Heart right ventricle (tissue), 16 donors: ENCODE measurements at regions of chr4 and their contacts with region 1.

Region 1: DNA sequence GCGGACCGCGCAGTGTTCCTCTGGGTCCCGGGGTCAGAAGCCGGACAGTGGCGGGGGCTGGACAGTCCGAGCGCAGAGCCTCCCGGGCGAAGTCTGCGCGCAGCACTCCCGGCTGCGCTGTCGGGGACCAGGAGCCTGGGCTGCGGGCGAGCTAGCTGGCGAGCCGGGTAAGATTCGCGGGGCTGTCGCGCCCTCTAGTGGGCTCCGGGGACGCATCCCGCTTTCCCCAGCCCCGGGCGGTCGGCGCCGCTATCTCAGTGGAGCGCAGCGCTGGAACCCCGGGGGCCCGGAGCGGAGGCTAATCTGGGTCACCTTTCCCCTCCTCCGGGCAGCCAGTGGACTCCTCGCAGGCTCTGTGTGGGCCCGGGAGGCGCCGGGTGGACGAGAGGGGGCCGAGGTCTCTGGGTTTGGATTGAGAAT is 4.2 kb downstream of the PDGFRA start:
- DNase-seq: peak; percentile 81 to 88
- ATAC-seq: peak; percentile 82 to 95 (median 88)
- H3K4me3 ChIP-seq: peak overlapping the region; percentile 26 to 65 (median 61)
- H3K27ac ChIP-seq: peak overlapping the region; percentile 19 to 85 (median 70)
- H3K4me1 ChIP-seq: peaks cover 4 to 67% (median 49%) of the 10 kb centered on the region in 9 donors
- H3K27me3 ChIP-seq: peaks cover 20 to 55% (median 46%) of the 10 kb centered on the region in 7 donors
- CTCF ChIP-seq: peak; percentile 73 to 90 (median 81)

Region 2: GRCh38 chr4:52376132-52376704 is 1857.1 kb before region 1 on chr4:
- intact Hi-C with region 1: loop called in 1 of 10 experiments (anchors 10 kb)
- DNase-seq: peak in 1 of 2 donors; percentile 38
- ATAC-seq: peak in 1 of 8 donors; percentile 21
- H3K4me3 ChIP-seq: no peak overlapping the region
- H3K27ac ChIP-seq: no peak overlapping the region
- H3K4me1 ChIP-seq: peaks cover 0 to 9% (median 0%) of the 10 kb centered on the region in 9 donors
- H3K27me3 ChIP-seq: peaks cover 0 to 6% (median 0%) of the 10 kb centered on the region in 7 donors
- CTCF ChIP-seq: peak; percentile 51 to 71 (median 62)

Region 3: GRCh38 chr4:53015681-53016080 is 1217.6 kb before region 1 on chr4:
- intact Hi-C with region 1: loop called (anchors 5 to 10 kb)
- DNase-seq: peak in 1 of 2 donors; percentile 38
- ATAC-seq: peak in 1 of 8 donors; percentile 29
- H3K4me3 ChIP-seq: no peak overlapping the region
- H3K27ac ChIP-seq: no peak overlapping the region
- H3K4me1 ChIP-seq: peaks cover 6 to 70% (median 55%) of the 10 kb centered on the region in 9 donors
- H3K27me3 ChIP-seq: no peaks in the 10 kb centered on the region
- CTCF ChIP-seq: peak; percentile 35 to 80 (median 66)

Region 4: DNA sequence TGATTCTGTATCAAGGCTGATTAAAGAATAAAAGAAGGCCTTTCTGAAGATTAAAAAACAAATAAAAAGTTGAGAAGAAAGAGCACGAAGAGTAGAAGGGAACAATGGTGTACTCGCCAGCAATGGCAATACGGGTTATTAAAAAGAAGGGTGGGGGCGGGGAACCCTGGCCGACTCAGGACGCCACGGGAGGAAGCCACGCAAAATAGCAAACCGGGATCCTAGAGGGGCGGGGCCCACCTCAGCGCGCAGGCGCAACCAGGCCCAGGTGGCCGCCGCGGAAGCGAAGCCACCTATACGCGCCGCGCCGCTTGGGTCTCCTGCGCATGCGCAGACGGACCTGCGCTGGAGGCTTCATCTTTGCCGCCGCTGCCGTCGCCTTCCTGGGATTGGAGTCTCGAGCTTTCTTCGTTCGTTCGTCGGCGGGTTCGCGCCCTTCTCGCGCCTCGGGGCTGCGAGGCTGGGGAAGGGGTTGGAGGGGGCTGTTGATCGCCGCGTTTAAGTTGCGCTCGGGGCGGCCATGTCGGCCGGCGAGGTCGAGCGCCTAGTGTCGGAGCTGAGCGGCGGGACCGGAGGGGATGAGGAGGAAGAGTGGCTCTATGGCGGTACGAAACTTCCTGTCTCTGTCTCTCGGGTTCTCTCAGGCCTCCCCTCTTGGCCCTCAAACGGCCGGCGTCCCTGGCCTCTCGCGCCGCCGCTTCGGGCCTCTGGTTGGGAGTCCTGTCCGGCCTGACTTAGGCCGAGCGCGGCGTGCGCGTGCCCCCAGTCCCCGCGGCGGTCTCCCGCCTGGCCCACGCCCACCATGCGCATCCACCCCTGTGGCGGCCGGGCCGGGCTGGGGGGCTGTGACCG is 855.7 kb before region 1 on chr4 and contains the start of gene FIP1L1:
- intact Hi-C with region 1: loop called in 3 of 10 experiments (anchors 5 to 10 kb)
- DNase-seq: peak; percentile 94 to 96
- ATAC-seq: peak; percentile 99 to 100 (median 100)
- H3K4me3 ChIP-seq: peak within 1 kb of the TSS; percentile 72 to 93 (median 86)
- H3K27ac ChIP-seq: peak within 1 kb of the TSS; percentile 67 to 94 (median 90)
- H3K4me1 ChIP-seq: peaks cover 0 to 33% (median 18%) of the 10 kb centered on the region in 9 donors
- H3K27me3 ChIP-seq: peaks cover 0 to 2% (median 0%) of the 10 kb centered on the region in 7 donors
- CTCF ChIP-seq: peak in 1 of 9 donors; percentile 8
- total RNA-seq, gene FIP1L1: 26.9 to 47.0 (median 33.7) TPM

Region 5: GRCh38 chr4:53702334-53703266 is 530.7 kb before region 1 on chr4:
- intact Hi-C with region 1: loop called in 6 of 10 experiments (anchors 5 to 10 kb)
- DNase-seq: peak; percentile 87 to 88
- ATAC-seq: peak; percentile 93 to 97 (median 95)
- H3K4me3 ChIP-seq: peak overlapping the region in 9 of 10 donors; percentile 14 to 46 (median 36)
- H3K27ac ChIP-seq: peak overlapping the region; percentile 36 to 85 (median 72)
- H3K4me1 ChIP-seq: peaks cover 8 to 45% (median 33%) of the 10 kb centered on the region in 9 donors
- H3K27me3 ChIP-seq: no peaks in the 10 kb centered on the region
- CTCF ChIP-seq: peak in 3 of 9 donors; percentile 14 to 23 (median 20)

Region 6: DNA sequence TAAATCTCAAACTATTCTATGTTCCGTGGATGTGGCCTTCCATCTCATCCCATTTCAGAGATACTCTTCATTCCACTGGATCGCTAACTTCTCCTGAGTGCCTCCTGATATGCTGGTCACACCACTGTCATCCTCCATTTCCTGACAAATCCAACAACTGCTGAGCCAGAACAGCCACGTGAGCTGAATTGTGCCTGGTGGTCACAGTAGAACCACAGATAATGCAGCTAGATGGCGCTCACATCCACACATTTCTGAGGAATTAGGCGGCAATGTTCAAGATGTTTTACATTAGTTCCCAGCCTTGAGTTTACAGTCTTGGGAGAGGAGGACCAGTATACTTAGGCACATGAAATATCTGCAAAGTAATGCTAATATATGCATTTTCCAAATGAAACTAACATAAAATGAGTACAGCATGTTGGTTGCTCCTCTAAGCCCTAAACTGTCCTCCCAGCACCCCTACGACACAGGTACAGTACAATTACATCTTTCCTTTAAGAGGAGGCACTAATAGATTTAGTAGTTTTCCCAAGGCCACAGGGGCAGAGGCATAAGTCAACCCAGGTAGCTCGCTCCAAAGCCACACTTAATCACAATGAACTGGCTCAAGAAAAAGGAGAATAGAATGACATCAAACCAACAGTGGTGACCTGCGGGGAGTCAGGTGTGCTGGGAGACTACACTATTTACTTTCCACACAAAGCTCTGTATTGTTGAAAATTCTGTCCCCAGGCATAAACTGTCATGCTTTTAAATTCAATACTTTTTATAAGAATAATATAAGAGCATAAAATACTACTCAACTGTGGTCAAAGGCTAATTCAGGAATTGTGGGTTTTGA is 303.1 kb before region 1 on chr4:
- intact Hi-C with region 1: loop called in 1 of 10 experiments (anchors 5 kb)
- DNase-seq: peak; percentile 20 to 82
- ATAC-seq: peak; percentile 72 to 94 (median 92)
- H3K4me3 ChIP-seq: no peak overlapping the region
- H3K27ac ChIP-seq: peak overlapping the region in 1 of 10 donors; percentile 12
- H3K4me1 ChIP-seq: peaks cover 0 to 11% (median 0%) of the 10 kb centered on the region in 9 donors
- H3K27me3 ChIP-seq: peaks cover 0 to 11% (median 2%) of the 10 kb centered on the region in 7 donors
- CTCF ChIP-seq: peak; percentile 54 to 85 (median 78)

Region 7: DNA sequence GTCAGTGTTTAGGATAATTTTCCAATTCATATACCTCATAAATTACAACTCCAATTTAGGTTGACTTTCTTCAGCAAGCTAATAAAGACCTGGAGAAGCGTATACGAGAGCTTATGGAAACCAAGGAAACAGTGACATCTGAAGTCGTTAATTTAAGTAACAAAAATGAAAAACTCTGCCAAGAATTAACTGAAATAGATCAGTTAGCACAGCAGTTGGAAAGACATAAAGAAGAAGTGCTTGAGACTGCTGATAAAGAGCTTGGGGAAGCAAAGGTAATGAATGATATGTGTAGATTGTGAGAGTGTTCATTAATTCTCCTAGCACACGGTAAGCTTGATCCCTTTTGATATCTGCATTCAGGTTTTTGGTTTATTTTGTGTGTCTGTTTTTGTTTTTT is 1732.3 kb after region 1 on chr4:
- intact Hi-C with region 1: no loop called
- DNase-seq: no peak
- ATAC-seq: no peak
- H3K4me3 ChIP-seq: no peak overlapping the region
- H3K27ac ChIP-seq: no peak overlapping the region
- H3K4me1 ChIP-seq: no peaks in the 10 kb centered on the region
- H3K27me3 ChIP-seq: no peaks in the 10 kb centered on the region
- CTCF ChIP-seq: no peak